ENCODE measurements at regions of chr3 and their contacts with region 1.

Region 1: DNA sequence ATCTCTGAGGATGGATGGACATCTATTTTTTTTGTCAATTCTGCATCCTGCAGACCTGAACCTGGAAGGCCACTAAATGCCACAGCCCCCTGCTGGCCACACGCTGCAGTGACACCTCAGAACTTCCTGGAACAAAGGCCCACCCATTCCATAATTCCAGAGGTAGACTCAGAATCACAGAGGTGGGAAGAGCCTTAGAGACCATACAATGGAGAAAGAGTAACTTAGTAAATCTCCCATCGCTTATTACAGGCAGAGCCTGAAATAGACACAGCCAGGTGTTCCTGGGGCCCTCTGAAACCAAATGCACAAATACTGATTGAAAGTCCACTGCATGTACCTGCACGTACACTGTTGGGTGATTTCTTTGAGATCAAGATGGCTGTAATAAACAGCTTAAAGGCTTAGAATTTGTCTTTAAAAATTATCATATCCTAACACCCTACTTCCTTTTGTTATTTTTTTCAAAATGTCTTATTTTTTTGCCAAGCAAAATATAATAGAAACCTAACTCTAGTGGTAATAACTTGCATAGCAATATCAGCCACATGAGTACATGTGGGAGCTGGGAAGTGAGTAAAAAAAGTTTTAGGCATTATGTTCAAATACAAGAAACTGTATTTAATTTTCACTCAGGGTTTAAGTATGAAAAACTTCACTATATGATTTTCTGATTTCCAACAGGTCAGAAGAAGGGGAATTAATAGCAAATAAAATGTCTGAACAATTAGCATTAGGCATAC is 62.7 kb downstream of the EOMES start:
- DNase-seq: peak; percentile 41
- H3K4me3 ChIP-seq: no peak overlapping the region
- H3K27ac ChIP-seq: no peak overlapping the region
- H3K4me1 ChIP-seq: peaks cover 30% of the 10 kb centered on the region
- H3K27me3 ChIP-seq: no peaks in the 10 kb centered on the region
- CTCF ChIP-seq: peak; percentile 88 to 95

Region 2: DNA sequence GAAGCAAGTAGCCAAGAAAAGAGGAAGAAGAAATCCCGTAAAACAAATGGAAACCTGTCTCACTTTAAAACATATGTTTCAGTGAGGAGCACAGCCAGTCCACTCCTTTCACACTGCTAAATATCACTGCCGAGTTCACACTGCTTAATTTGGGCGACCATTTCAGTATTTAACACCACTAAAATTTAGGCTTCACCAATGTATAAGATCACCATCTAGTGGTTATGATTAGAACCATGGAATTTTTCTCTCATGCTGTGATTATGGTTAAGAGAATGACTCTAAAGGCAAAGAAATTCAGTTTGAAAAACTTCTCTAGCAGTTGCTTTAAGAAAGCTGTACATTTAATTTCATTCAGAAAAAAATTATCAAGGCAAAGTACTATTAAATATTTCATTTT is 191.9 kb before region 1 on chr3:
- CTCF ChIA-PET with region 1: no interaction called
- dilution Hi-C with region 1: no loop called
- in situ Hi-C with region 1: no loop called
- intact Hi-C with region 1: loop called (anchors 1 kb)
- DNase-seq: peak; percentile 14
- H3K4me3 ChIP-seq: no peak overlapping the region
- H3K27ac ChIP-seq: no peak overlapping the region
- H3K4me1 ChIP-seq: no peaks in the 10 kb centered on the region
- H3K27me3 ChIP-seq: no peaks in the 10 kb centered on the region
- CTCF ChIP-seq: peak; percentile 48 to 59

Region 3: DNA sequence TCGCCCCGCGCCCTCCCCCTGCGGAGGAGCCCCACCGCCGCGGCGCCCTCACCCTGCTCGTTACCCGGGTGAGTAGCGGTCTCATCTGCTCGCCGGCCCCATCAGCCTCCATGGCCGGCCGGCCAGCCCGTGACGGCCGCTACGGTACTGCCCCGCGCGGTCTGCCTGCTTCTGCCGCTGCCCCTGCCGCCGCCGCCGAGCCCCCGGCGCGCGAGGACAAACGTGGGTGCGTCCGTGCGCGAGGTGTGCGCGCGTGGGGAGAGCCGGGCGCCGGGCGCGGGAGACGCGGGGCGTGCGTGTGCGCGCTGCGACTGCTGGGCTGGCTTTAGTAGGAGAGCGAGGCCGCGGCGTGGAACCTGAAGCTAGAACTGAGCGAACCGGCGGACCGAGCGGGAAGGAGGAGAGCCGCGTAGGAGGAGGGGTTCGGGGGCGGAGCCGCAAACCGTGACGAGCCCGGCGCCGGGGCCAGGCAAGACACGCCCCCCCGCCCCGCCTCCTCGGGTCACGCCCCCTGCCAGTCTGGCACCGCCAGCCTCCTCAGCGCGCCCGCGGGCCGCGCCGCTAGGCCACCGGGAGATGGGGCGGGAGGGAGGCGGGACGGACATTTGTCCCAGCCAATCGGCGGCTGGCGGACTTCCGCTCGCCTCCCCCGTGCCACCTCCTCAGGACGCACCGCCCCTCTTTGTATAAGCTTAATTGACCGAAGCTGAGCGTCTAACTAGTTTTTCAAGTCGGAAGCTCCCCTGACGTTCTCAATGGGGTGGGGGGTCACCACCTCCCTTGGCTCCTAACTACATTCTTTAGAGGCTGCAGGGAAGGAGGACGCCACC is 175.2 kb before region 1 on chr3 and contains the start of gene SLC4A7:
- CTCF ChIA-PET with region 1: no interaction called
- dilution Hi-C with region 1: no loop called
- in situ Hi-C with region 1: no loop called
- intact Hi-C with region 1: loop called (anchors 1 kb)
- DNase-seq: peak; percentile 96
- H3K4me3 ChIP-seq: peak within 1 kb of the TSS; percentile 71 to 93 (median 92)
- H3K27ac ChIP-seq: peak within 1 kb of the TSS; percentile 67
- H3K4me1 ChIP-seq: peaks cover 13% of the 10 kb centered on the region
- H3K27me3 ChIP-seq: no peaks in the 10 kb centered on the region
- CTCF ChIP-seq: no peak
- total RNA-seq, gene SLC4A7: 95.4 to 123 TPM

Region 4: GRCh38 chr3:27596334-27596841 is 63.1 kb before region 1 on chr3:
- CTCF ChIA-PET with region 1: no interaction called
- dilution Hi-C with region 1: loop called (anchors 10 kb)
- in situ Hi-C with region 1: no loop called
- intact Hi-C with region 1: no loop called
- DNase-seq: no peak
- H3K4me3 ChIP-seq: no peak overlapping the region
- H3K27ac ChIP-seq: no peak overlapping the region
- H3K4me1 ChIP-seq: peaks cover under 1% of the 10 kb centered on the region
- H3K27me3 ChIP-seq: no peaks in the 10 kb centered on the region
- CTCF ChIP-seq: no peak

Region 5: DNA sequence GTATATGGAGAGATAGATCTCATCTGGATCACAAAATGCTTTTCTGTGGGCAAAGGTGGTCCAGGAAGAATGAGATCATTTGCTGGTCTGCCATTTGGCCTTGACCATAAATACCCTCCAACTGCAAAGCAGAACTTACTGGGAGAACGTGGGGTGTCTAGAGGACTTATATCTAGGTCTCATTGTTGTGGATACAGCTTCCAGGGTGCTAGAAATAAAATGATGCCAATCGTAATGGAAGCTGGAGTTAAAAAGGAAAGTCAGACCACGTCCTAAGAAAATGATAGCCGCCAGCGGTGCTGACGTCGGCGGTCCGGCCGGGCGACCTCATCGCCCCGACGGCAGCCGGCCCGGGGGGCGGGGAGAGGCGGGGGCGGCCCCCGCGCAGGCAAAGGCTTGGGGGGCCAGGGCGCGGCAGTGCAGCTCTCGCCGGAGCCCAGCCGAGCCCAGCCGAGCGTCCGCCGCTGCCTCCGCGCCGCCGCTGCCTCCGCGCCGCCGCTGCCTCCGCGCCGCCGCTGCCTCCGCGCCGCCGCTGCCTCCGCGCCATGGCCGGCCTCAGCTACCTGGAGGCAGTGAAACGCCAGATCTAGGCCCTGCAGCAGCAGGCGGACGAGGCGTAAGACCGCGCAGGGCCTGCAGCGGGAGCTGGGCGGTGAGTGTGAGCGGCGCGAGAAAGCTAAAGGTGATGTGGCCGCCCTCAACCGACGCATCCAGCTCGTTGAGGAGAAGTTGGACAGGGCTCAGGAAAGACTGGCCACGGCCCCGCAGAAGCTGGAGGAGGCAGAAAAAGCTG is 26.8 kb before region 1 on chr3:
- CTCF ChIA-PET with region 1: no interaction called
- dilution Hi-C with region 1: no loop called
- in situ Hi-C with region 1: no loop called
- intact Hi-C with region 1: loop called (anchors 2 kb)
- DNase-seq: peak; percentile 60
- H3K4me3 ChIP-seq: peak overlapping the region in 2 of 3 experiments; percentile 38 to 46
- H3K27ac ChIP-seq: no peak overlapping the region
- H3K4me1 ChIP-seq: no peaks in the 10 kb centered on the region
- H3K27me3 ChIP-seq: no peaks in the 10 kb centered on the region
- CTCF ChIP-seq: no peak

Region 6: GRCh38 chr3:27861046-27862036 is 201.9 kb after region 1 on chr3:
- CTCF ChIA-PET with region 1: no interaction called
- dilution Hi-C with region 1: no loop called
- in situ Hi-C with region 1: no loop called
- intact Hi-C with region 1: no loop called
- DNase-seq: no peak
- H3K4me3 ChIP-seq: no peak overlapping the region
- H3K27ac ChIP-seq: no peak overlapping the region
- H3K4me1 ChIP-seq: no peaks in the 10 kb centered on the region
- H3K27me3 ChIP-seq: no peaks in the 10 kb centered on the region
- CTCF ChIP-seq: no peak